ENCODE measurements at regions of chr18 and their contacts with region 1.

Region 1: DNA sequence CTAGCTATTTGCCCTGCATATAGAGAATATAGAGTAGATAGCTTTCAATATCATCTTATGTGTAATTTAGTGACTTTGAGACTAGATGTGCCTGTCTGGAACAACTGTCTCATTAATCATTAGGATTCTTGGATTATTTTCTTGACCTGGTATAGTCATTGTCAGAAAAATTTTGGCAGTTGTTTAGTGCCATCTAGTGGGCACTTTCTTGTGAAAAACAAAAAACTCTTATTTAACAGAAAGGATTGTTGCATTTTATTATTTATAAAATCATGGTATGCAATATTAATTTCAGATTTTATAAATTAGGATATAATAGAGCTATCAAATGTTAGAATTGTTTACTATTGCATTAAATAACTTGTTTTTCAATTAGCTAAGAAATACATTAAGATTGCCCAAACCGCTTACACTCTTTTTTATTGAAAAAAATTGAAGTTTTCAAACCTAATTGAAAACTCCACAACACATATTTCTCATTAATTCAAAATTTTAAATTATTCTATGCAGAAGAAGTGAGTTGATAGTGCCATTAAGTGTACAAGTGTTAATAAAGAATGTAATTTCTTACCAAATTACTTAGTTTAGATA is 80.3 kb downstream of the DYNAP start:
- DNase-seq: no peak
- H3K4me3 ChIP-seq: no peak overlapping the region
- H3K27ac ChIP-seq: no peak overlapping the region
- H3K4me1 ChIP-seq: peaks cover 0 to 3% (median 0%) of the 10 kb centered on the region in 4 experiments; a peak in 1 of 7 replicates
- H3K27me3 ChIP-seq: no peaks in the 10 kb centered on the region
- CTCF ChIP-seq: peak in 1 of 3 experiments; percentile 34; a peak in 1 of 4 replicates
- EP300 ChIP-seq: no peak
- POLR2A ChIP-seq: no peak
- RAD21 ChIP-seq: peak; percentile 66 to 74

Region 2: DNA sequence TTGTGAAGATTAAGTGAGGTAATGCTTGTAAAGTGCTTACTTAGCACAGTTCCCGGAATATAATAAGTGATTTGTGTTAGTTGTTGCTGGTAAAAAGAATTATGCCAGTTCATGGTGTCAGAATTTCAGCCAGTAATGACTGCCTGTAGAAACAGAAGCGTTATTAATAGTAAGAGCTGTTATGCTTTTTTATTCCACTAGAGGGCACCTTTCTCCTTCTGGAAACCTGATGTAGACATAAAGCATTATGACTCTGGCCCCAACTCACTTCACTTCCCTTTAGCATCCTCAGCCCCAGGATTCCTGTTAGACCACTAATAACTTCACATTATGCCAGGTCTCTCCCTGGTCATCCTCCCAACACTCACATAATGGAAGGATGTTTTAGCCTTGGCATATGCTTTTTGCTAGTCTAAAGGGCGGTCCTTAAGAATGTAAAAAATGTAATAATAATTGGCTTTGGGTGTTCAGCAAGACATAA is 278.8 kb before region 1 on chr18:
- CTCF ChIA-PET with region 1: interaction called, 16 read pairs
- POLR2A ChIA-PET with region 1: no interaction called
- DNase-seq: no peak
- H3K4me3 ChIP-seq: no peak overlapping the region
- H3K27ac ChIP-seq: no peak overlapping the region
- H3K4me1 ChIP-seq: peaks cover 0 to 4% (median 2%) of the 10 kb centered on the region in 4 experiments; a peak in 1 of 7 replicates
- H3K27me3 ChIP-seq: peaks cover 0 to 1% (median 0%) of the 10 kb centered on the region in 4 experiments; a peak in 1 of 7 replicates
- CTCF ChIP-seq: peak in 2 of 3 experiments; percentile 43 to 65; a peak in 2 of 4 replicates
- EP300 ChIP-seq: no peak
- POLR2A ChIP-seq: no peak
- RAD21 ChIP-seq: peak; percentile 80 to 84

Region 3: GRCh38 chr18:54423831-54424230 is 247.6 kb before region 1 on chr18:
- CTCF ChIA-PET with region 1: interaction called, 11 read pairs
- POLR2A ChIA-PET with region 1: no interaction called
- DNase-seq: no peak
- H3K4me3 ChIP-seq: no peak overlapping the region
- H3K27ac ChIP-seq: no peak overlapping the region
- H3K4me1 ChIP-seq: peaks cover 0 to 4% (median 0%) of the 10 kb centered on the region in 4 experiments; a peak in 1 of 7 replicates
- H3K27me3 ChIP-seq: no peaks in the 10 kb centered on the region
- CTCF ChIP-seq: no peak
- EP300 ChIP-seq: no peak
- POLR2A ChIP-seq: no peak
- RAD21 ChIP-seq: no peak

Region 4: GRCh38 chr18:54558609-54559585 is 112.5 kb before region 1 on chr18:
- CTCF ChIA-PET with region 1: interaction called, 15 read pairs
- POLR2A ChIA-PET with region 1: no interaction called
- DNase-seq: no peak
- H3K4me3 ChIP-seq: no peak overlapping the region
- H3K27ac ChIP-seq: no peak overlapping the region
- H3K4me1 ChIP-seq: peaks cover 0 to 3% (median 1%) of the 10 kb centered on the region in 4 experiments; a peak in 5 of 7 replicates
- H3K27me3 ChIP-seq: no peaks in the 10 kb centered on the region
- CTCF ChIP-seq: peak in 2 of 3 experiments; percentile 36 to 49; a peak in 2 of 4 replicates
- EP300 ChIP-seq: no peak
- POLR2A ChIP-seq: no peak
- RAD21 ChIP-seq: peak; percentile 59 to 61

Region 5: DNA sequence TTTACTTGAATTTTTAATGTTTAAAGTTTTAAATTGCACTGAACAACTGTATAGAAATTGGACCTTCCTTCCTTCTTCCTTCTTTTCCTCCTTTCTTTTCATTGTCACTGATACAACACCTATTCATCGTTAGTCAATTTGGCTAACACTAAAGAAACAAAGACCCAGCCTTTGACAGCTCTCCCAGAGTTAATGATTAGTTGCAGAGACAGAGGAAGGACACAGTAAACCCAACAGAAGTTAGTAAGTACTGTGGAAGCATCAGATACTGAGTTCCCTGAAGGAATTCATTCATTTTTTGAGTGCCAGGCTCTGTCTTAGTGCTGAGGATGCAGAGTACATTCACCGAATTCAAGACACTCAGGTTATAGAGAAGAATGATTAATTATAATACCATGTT is 79.0 kb after region 1 on chr18:
- CTCF ChIA-PET with region 1: no interaction called
- POLR2A ChIA-PET with region 1: no interaction called
- DNase-seq: no peak
- H3K4me3 ChIP-seq: no peak overlapping the region
- H3K27ac ChIP-seq: no peak overlapping the region
- H3K4me1 ChIP-seq: no peaks in the 10 kb centered on the region
- H3K27me3 ChIP-seq: no peaks in the 10 kb centered on the region; a peak in 1 of 7 replicates
- CTCF ChIP-seq: no peak
- EP300 ChIP-seq: no peak
- POLR2A ChIP-seq: no peak
- RAD21 ChIP-seq: no peak

Region 6: GRCh38 chr18:55096261-55096951 is 425.0 kb after region 1 on chr18:
- CTCF ChIA-PET with region 1: no interaction called
- POLR2A ChIA-PET with region 1: no interaction called
- DNase-seq: no peak
- H3K4me3 ChIP-seq: no peak overlapping the region
- H3K27ac ChIP-seq: no peak overlapping the region
- H3K4me1 ChIP-seq: no peaks in the 10 kb centered on the region; a peak in 1 of 7 replicates
- H3K27me3 ChIP-seq: no peaks in the 10 kb centered on the region
- CTCF ChIP-seq: peak; percentile 54 to 77 (median 64)
- EP300 ChIP-seq: no peak
- POLR2A ChIP-seq: no peak
- RAD21 ChIP-seq: peak; percentile 79 to 82

Measured in H1 (cell line).